ENCODE measurements at regions of chr6 and their contacts with region 1.

Region 1: DNA sequence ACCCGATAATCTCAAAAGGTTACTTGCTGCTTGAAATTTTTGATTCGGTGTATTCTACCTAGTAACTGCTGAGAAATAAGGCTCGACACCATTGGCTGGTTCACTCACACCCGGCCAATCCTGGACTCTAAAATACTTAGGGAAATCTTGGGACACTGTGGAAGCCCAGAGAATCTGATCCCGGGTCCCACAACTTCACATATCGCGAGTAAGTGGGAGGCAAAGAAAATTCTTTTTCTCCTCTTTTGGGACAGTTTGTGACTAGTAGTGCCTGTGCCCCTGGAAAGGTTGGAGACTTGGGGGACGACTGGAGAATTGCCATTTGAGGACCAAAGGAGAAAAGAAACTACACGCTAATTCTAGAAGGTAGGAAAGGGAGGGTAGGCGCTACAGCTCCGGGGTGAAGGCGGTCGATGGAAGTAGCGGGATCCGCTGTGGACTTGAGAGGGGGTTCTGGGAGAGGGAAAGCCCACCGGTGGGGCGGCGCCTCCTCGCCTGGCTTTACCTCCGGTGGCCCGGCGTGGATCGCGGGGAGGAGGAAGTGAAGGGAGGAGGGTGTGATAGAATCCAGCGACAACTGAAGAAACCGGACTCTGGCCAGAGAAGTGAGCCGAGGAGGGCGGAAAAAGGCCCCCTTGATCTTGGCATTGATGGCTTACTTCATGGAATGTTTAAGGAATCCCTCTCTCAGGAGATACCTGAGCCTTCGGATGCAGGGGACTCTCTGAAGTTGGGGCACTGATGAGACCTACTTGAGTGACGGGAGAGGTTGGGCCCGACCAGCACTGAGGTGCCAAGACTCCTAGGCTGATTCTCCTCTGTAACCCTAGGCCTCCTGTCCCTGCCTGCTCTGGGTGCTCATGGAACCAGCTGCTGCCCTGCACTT is 18.8 kb upstream of the BTN3A3 start:
- DNase-seq: peak; percentile 93
- H3K4me3 Mint-ChIP-seq: no peak overlapping the region
- H3K27ac Mint-ChIP-seq: no peak overlapping the region
- H3K4me1 Mint-ChIP-seq: peaks cover 29% of the 10 kb centered on the region
- H3K27me3 Mint-ChIP-seq: no peaks in the 10 kb centered on the region
- CTCF ChIP-seq: no peak

Region 2: DNA sequence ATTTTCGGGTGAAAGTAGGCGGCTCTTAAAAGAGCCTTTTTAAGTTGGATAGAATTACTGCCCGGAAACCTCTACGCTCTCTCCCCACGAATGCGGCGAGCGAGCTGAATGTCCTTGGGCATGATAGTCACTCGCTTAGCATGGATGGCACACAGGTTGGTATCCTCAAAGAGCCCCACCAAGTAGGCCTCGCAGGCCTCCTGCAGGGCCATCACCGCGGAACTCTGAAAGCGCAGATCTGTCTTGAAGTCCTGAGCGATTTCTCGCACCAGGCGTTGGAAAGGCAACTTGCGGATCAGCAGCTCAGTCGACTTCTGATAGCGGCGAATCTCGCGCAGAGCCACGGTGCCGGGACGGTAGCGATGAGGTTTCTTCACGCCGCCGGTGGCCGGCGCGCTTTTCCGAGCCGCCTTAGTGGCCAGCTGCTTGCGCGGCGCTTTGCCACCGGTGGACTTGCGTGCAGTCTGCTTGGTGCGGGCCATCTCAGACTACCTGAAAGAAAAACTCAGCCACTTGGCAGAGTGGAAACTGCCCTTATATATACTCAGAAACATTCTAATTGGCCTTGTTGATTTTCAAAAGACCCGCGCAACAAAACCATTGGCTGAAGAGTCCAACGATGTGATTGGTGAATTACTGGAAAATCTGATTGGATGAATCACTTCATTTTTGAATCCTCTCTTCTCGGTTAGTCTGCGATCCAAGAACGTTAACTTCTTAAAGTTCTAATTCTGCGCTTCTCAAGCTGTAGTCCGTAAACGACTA is 150.4 kb before region 1 on chr6:
- CTCF ChIA-PET with region 1: no interaction called
- POLR2A ChIA-PET with region 1: no interaction called
- intact Hi-C with region 1: no loop called
- DNase-seq: peak; percentile 97
- H3K4me3 Mint-ChIP-seq: no peak overlapping the region
- H3K27ac Mint-ChIP-seq: peak overlapping the region; percentile 54
- H3K4me1 Mint-ChIP-seq: peaks cover 6% of the 10 kb centered on the region
- H3K27me3 Mint-ChIP-seq: no peaks in the 10 kb centered on the region
- CTCF ChIP-seq: no peak

Region 3: DNA sequence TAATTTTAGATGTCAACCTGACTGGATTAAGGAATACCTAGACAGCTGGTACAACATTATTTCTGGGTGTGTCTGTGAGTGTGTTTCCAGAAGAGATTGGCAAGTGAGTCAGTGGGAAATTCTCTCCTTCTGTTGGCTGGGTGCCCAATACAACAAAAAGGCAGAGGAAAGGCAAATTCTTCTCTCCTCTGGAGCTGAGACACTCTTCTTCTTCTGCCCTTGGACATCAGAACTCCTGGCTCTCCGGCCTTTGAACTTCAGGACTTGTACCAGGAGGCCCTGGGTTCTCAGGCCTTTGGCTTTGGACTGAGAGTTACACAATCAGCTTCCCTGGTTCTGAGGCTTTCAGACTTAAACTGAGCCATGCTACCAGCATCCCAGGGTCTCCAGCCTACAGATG is 27.2 kb before region 1 on chr6:
- CTCF ChIA-PET with region 1: no interaction called
- POLR2A ChIA-PET with region 1: interaction called, 3 read pairs
- intact Hi-C with region 1: loop called (anchors 1 kb)
- DNase-seq: peak; percentile 94
- H3K4me3 Mint-ChIP-seq: no peak overlapping the region
- H3K27ac Mint-ChIP-seq: no peak overlapping the region
- H3K4me1 Mint-ChIP-seq: peaks cover 8% of the 10 kb centered on the region
- H3K27me3 Mint-ChIP-seq: no peaks in the 10 kb centered on the region
- CTCF ChIP-seq: no peak

Measured in MCF 10A (cell line).